Activated CD4-positive, alpha-beta T cell treated with anti-CD3 and anti-CD28 coated beads for 36 hours (primary cell): ENCODE measurements at regions of chr6 and their contacts with region 1.

Region 1: DNA sequence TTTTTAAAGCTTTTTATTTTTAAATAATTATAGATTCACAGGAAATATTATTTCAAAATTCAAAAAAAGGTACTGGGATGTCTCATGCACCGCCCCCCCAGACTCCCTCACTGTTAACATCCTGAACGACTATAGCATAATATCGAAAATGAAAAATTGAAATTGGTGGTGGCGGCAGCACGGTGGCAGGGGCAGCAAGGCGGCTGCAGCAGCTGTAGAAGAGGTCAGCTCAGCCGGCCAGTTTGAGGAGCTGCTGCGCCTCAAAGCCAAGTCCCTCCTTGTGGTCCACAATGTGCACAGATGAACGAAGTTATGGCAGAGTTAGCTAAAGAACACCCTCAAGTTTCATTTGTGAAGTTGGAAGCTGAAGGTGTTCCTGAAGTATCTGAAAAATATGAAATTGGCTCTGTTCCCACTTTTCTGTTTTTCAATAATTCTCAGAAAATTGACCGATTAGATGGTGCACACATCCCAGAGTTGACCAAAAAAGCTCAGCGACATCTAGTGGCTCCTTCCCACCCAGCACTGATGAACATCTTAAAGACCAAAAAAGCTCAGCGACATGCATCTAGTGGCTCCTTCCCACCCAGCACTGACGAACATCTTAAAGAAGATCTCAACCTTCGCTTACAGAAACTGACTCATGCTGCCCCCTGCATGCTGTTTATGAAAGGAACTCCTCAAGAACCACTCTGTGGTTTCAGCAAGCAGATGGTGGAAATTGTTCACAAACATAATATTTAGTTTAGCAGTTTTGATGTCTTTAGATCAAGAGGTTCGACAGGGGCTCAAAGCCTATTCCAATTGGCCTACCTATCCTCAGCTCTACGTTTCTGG is 100.8 kb downstream of the FAM217A start:
- DNase-seq: peak; percentile 68
- ATAC-seq: peak; percentile 99
- H3K4me3 Mint-ChIP-seq: no peak overlapping the region
- H3K27ac Mint-ChIP-seq: no peak overlapping the region
- H3K4me1 Mint-ChIP-seq: peaks cover 11% of the 10 kb centered on the region
- H3K27me3 Mint-ChIP-seq: peaks cover 2% of the 10 kb centered on the region

Region 2: GRCh38 chr6:3990692-3991501 is 12.8 kb after region 1 on chr6:
- CTCF ChIA-PET with region 1: interaction called, 23 read pairs
- POLR2A ChIA-PET with region 1: no interaction called
- intact Hi-C with region 1: no loop called
- DNase-seq: peak; percentile 86
- ATAC-seq: peak; percentile 100
- H3K4me3 Mint-ChIP-seq: no peak overlapping the region
- H3K27ac Mint-ChIP-seq: peak overlapping the region; percentile 7
- H3K4me1 Mint-ChIP-seq: peaks cover 10% of the 10 kb centered on the region
- H3K27me3 Mint-ChIP-seq: no peaks in the 10 kb centered on the region

Region 3: GRCh38 chr6:3997177-3997770 is 19.2 kb after region 1 on chr6:
- CTCF ChIA-PET with region 1: interaction called, 13 read pairs
- POLR2A ChIA-PET with region 1: no interaction called
- intact Hi-C with region 1: no loop called
- DNase-seq: no peak
- ATAC-seq: no peak
- H3K4me3 Mint-ChIP-seq: no peak overlapping the region
- H3K27ac Mint-ChIP-seq: no peak overlapping the region
- H3K4me1 Mint-ChIP-seq: peaks cover 16% of the 10 kb centered on the region
- H3K27me3 Mint-ChIP-seq: no peaks in the 10 kb centered on the region

Region 4: DNA sequence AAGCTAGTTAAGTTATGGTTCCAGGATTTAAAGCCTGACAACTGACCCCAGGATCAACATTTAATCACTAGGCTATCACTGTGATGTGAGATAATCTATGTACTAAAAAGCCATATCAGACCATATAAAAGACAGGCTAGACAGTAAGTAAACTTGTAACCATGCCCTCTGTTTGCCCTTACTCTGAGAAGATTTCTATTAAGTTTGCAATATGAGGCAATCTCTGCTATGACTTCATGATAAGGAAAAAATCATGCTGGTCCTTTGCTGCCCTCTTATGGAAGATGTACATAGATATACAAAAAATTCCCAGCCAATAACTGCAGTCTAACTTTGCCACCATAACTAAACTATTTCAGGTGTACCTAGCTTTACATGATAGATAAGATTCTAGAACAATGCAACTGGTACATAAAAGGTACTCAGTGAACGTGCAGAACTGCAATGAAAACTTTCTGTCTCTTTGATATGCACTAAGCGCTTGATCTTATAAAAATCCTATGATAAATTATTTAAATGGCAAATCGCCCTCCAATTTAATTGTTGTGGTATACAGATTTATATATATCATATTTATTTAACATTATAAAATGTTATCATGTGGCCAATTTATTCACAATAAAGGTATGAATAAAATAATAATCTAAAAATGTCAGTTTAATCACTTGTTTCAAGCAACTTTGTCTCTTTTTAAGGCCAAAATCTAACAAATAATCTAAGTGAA is 30.4 kb after region 1 on chr6:
- CTCF ChIA-PET with region 1: interaction called, 20 read pairs
- POLR2A ChIA-PET with region 1: no interaction called
- intact Hi-C with region 1: no loop called
- DNase-seq: no peak
- ATAC-seq: peak; percentile 57
- H3K4me3 Mint-ChIP-seq: no peak overlapping the region
- H3K27ac Mint-ChIP-seq: peak overlapping the region; percentile 58
- H3K4me1 Mint-ChIP-seq: peaks cover 51% of the 10 kb centered on the region
- H3K27me3 Mint-ChIP-seq: no peaks in the 10 kb centered on the region

Region 5: GRCh38 chr6:4358414-4359114 is 380.5 kb after region 1 on chr6:
- CTCF ChIA-PET with region 1: no interaction called
- POLR2A ChIA-PET with region 1: no interaction called
- intact Hi-C with region 1: no loop called
- DNase-seq: peak; percentile 72
- ATAC-seq: peak; percentile 87
- H3K4me3 Mint-ChIP-seq: no peak overlapping the region
- H3K27ac Mint-ChIP-seq: no peak overlapping the region
- H3K4me1 Mint-ChIP-seq: no peaks in the 10 kb centered on the region
- H3K27me3 Mint-ChIP-seq: peaks cover 10% of the 10 kb centered on the region